ENCODE measurements at regions of chr7 and their contacts with region 1.

Region 1: DNA sequence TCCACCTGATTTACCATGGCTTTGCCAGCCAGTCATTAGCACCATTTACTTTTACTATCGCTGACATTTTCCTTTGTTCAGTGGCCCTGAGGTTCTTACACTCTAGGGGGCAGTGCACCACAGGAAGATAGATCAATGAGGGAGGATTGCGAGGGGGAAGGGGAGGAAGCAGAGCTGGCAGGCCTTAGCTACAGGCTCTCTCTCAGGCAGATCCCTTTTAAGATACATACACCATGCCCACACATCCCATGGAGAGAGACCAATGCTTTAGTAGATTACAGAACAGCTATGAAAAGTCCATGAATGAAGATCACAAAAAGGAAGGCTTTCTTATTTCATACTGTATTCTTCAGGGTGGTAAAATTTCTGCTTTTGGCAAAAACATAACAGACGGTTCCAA is 47.4 kb downstream of the DENND11 start:
- DNase-seq: peak; percentile 61 to 69 (median 68)
- H3K4me3 ChIP-seq: no peak overlapping the region
- H3K4me3 Mint-ChIP-seq: no peak overlapping the region
- H3K27ac ChIP-seq: no peak overlapping the region
- H3K27ac Mint-ChIP-seq: peak overlapping the region in 2 of 7 donors; percentile 65 to 70
- H3K4me1 ChIP-seq: peaks cover under 1 to 1% of the 10 kb centered on the region in 2 donors
- H3K4me1 Mint-ChIP-seq: peaks cover 12% of the 10 kb centered on the region
- H3K27me3 ChIP-seq: no peaks in the 10 kb centered on the region
- H3K27me3 Mint-ChIP-seq: no peaks in the 10 kb centered on the region
- CTCF ChIP-seq: peak; percentile 79

Region 2: GRCh38 chr7:141701489-141702046 is 47.0 kb after region 1 on chr7:
- intact Hi-C with region 1: loop called in 1 of 2 experiments (anchors 10 kb)
- DNase-seq: peak; percentile 6 to 23 (median 9)
- H3K4me3 ChIP-seq: peak overlapping the region; percentile 47 to 90 (median 77)
- H3K4me3 Mint-ChIP-seq: peak overlapping the region; percentile 79 to 84
- H3K27ac ChIP-seq: no peak overlapping the region
- H3K27ac Mint-ChIP-seq: no peak overlapping the region
- H3K4me1 ChIP-seq: peaks cover 15 to 22% of the 10 kb centered on the region in 2 donors
- H3K4me1 Mint-ChIP-seq: peaks cover 40% of the 10 kb centered on the region
- H3K27me3 ChIP-seq: peaks cover 14 to 18% of the 10 kb centered on the region in 2 donors
- H3K27me3 Mint-ChIP-seq: peaks cover 22 to 30% (median 24%) of the 10 kb centered on the region in 3 donors
- CTCF ChIP-seq: no peak

Region 3: DNA sequence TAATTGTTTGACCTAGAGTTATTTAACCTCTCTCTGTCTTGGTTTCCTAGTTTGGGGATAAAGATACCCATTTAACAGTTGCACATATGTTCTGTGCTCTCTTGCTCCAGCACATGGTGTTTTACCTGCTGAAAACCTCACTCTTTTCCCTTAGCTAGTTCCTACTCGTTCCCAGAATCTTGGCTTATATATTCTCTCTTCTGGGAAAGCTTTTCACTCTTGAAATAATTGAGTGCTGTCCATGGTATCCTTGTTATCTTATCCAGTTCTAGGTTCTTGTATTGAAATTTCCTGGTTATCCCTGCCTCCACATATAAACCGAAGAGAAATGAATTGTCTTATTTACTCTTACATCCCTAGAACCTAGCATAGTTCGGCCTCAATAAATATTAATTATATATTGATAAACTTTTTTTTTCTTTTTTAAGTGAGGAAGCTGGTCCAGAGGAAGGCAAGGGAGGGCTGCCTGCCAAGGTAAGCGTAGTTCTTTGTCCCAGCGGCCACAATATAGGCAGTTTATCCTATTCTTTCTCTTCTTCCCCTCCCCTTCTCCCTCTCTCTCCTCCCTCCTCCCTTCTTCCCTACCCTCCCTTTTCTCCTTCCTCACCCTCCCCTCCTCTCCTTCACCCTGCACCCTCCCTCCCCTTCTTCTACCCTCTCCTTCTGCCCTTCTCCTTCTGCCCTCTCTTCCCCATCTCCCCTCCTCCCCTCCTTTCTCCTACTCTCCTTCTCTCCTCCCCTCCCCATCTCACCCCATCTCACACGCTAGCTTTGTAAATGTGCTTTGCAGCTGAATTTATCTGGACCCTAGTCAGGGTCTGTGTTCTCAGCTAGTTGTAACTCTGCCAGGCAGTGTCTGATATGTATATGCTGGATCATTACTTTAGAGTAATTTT is 61.5 kb after region 1 on chr7:
- intact Hi-C with region 1: no loop called
- DNase-seq: no peak
- H3K4me3 ChIP-seq: no peak overlapping the region
- H3K4me3 Mint-ChIP-seq: no peak overlapping the region
- H3K27ac ChIP-seq: no peak overlapping the region
- H3K27ac Mint-ChIP-seq: no peak overlapping the region
- H3K4me1 ChIP-seq: no peaks in the 10 kb centered on the region
- H3K4me1 Mint-ChIP-seq: no peaks in the 10 kb centered on the region
- H3K27me3 ChIP-seq: no peaks in the 10 kb centered on the region
- H3K27me3 Mint-ChIP-seq: peaks cover 0 to 2% (median 1%) of the 10 kb centered on the region in 3 donors
- CTCF ChIP-seq: no peak

Region 4: DNA sequence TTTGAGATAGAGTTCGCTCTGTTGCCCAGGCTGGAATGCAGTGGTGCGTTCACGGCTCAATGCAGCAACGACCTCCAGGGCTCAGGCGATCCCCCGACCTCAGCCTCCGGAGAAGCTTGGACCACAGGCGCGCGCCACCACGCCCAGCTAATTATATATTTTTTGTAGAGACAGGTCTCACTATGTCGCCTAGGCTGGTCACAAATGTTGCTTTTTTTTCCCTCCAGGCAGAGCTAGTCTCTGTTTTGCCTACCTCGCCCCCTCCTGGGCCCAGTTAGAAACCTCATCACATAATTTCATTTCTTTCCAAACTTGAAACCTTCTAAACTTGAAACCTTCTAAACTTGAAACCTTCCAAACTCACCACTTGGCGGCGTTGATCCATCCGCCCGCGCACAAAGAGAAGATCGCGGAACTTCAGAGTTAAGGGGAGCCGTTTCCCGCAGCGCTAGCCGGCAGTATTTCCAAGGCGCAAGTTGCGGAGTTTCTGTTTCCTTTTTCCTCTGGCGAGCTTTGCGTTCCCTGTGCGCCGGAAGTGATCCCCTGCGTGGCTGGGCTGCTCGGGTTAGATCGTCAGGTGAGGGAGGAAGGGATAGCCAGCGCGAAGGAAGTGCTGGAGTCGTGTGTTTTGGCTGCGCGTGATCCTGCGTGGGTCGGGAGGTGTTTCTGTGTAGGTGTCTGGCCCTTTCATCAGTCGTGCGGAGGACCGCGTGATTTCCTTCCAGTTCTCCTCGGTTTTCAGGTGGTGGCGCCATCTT is 83.5 kb after region 1 on chr7 and contains the start of gene SSBP1:
- intact Hi-C with region 1: loop called in 1 of 2 experiments (anchors 10 kb)
- DNase-seq: peak; percentile 93 to 94 (median 93)
- H3K4me3 ChIP-seq: peak within 1 kb of the TSS; percentile 77 to 96 (median 86)
- H3K4me3 Mint-ChIP-seq: peak within 1 kb of the TSS; percentile 96 to 99
- H3K27ac ChIP-seq: peak within 1 kb of the TSS; percentile 80 to 96
- H3K27ac Mint-ChIP-seq: peak within 1 kb of the TSS; percentile 97 to 100 (median 99)
- H3K4me1 ChIP-seq: peaks cover 15 to 19% of the 10 kb centered on the region in 2 donors
- H3K4me1 Mint-ChIP-seq: peaks cover 22% of the 10 kb centered on the region
- H3K27me3 ChIP-seq: no peaks in the 10 kb centered on the region
- H3K27me3 Mint-ChIP-seq: no peaks in the 10 kb centered on the region
- CTCF ChIP-seq: peak; percentile 87
- polyA plus RNA-seq, gene SSBP1: 66.9 to 197 (median 184) TPM

Region 5: DNA sequence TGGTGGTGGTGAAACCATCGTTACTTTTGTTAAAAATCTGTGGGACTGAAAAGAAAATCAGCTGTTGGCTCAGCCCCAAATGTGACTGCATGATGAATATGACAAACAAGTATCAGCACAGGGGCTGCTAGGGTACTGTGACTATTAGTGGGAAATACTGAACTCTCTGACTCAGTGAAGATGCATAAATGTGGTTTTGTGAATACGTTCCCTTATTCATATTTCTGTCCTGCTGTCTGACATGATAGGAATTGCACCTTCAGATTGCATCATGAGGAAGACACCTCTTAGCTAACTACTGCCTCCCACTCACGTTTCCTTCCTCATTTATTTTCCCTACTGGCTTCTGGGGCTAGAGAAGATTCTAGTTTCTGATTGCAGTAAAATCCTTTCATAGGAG is 290.8 kb after region 1 on chr7:
- intact Hi-C with region 1: loop called in 1 of 2 experiments (anchors 10 kb)
- DNase-seq: peak; percentile 93 to 99 (median 99)
- H3K4me3 ChIP-seq: peak overlapping the region; percentile 4 to 61 (median 19)
- H3K4me3 Mint-ChIP-seq: peak overlapping the region; percentile 45 to 71
- H3K27ac ChIP-seq: peak overlapping the region; percentile 38 to 89
- H3K27ac Mint-ChIP-seq: peak overlapping the region; percentile 96 to 99 (median 98)
- H3K4me1 ChIP-seq: peaks cover 58 to 74% of the 10 kb centered on the region in 2 donors
- H3K4me1 Mint-ChIP-seq: peaks cover 64% of the 10 kb centered on the region
- H3K27me3 ChIP-seq: no peaks in the 10 kb centered on the region
- H3K27me3 Mint-ChIP-seq: no peaks in the 10 kb centered on the region
- CTCF ChIP-seq: no peak

Measured in CD14-positive monocyte (primary cell).